HepG2 (cell line): ENCODE measurements at regions of chr1 and their contacts with region 1.

Region 1: GRCh38 chr1:40531381-40532061 is at the start of gene ZNF684:
- DNase-seq: peak; percentile 96
- ATAC-seq: peak; percentile 95
- H3K4me3 ChIP-seq: peak within 1 kb of the TSS; percentile 78 to 94 (median 85)
- H3K27ac ChIP-seq: peak within 1 kb of the TSS; percentile 82
- H3K4me1 ChIP-seq: peaks cover 46% of the 10 kb centered on the region
- H3K27me3 ChIP-seq: no peaks in the 10 kb centered on the region; a peak in 1 of 5 replicates
- CTCF ChIP-seq: no peak
- EP300 ChIP-seq: peak in 1 of 2 experiments; percentile 48; a peak in 2 of 4 replicates
- POLR2A ChIP-seq: peak; percentile 74 to 76
- RAD21 ChIP-seq: no peak
- total RNA-seq, gene ZNF684: 15.2 and 18.8 TPM in 2 replicates

Region 2: GRCh38 chr1:40508375-40509341 is 22.9 kb before region 1 on chr1 and contains the start of gene EXO5:
- CTCF ChIA-PET with region 1: no interaction called
- POLR2A ChIA-PET with region 1: interaction called, 27 read pairs
- in situ Hi-C with region 1: no loop called
- intact Hi-C with region 1: no loop called
- DNase-seq: peak; percentile 58
- ATAC-seq: peak; percentile 98
- H3K4me3 ChIP-seq: peak within 1 kb of the TSS; percentile 70 to 79 (median 70)
- H3K27ac ChIP-seq: peak within 1 kb of the TSS; percentile 76
- H3K4me1 ChIP-seq: peaks cover 18% of the 10 kb centered on the region
- H3K27me3 ChIP-seq: no peaks in the 10 kb centered on the region; a peak in 1 of 5 replicates
- CTCF ChIP-seq: no peak; the same call in 1 of the 2 replicates
- EP300 ChIP-seq: no peak
- POLR2A ChIP-seq: peak; percentile 76 to 93
- RAD21 ChIP-seq: 0 out of 2 replicates have a peak, but pooled peaks have one; percentile 42
- total RNA-seq, gene EXO5: 20.5 and 29.6 TPM in 2 replicates

Region 3: GRCh38 chr1:40575336-40575735 is 43.8 kb after region 1 on chr1:
- CTCF ChIA-PET with region 1: no interaction called
- POLR2A ChIA-PET with region 1: no interaction called
- in situ Hi-C with region 1: no loop called
- intact Hi-C with region 1: no loop called
- DNase-seq: no peak
- ATAC-seq: no peak
- H3K4me3 ChIP-seq: no peak overlapping the region
- H3K27ac ChIP-seq: no peak overlapping the region
- H3K4me1 ChIP-seq: no peaks in the 10 kb centered on the region
- H3K27me3 ChIP-seq: peaks cover 0 to 7% of the 10 kb centered on the region in 2 experiments; a peak in 2 of 5 replicates
- CTCF ChIP-seq: no peak
- EP300 ChIP-seq: no peak
- POLR2A ChIP-seq: no peak
- RAD21 ChIP-seq: no peak

Region 4: GRCh38 chr1:41294216-41294615 is 762.7 kb after region 1 on chr1:
- CTCF ChIA-PET with region 1: no interaction called
- POLR2A ChIA-PET with region 1: no interaction called
- in situ Hi-C with region 1: no loop called
- intact Hi-C with region 1: no loop called
- DNase-seq: no peak
- ATAC-seq: no peak
- H3K4me3 ChIP-seq: no peak overlapping the region
- H3K27ac ChIP-seq: no peak overlapping the region
- H3K4me1 ChIP-seq: peaks cover 8% of the 10 kb centered on the region; the same call in 1 of the 2 replicates
- H3K27me3 ChIP-seq: no peaks in the 10 kb centered on the region; a peak in 2 of 5 replicates
- CTCF ChIP-seq: no peak
- EP300 ChIP-seq: no peak
- POLR2A ChIP-seq: no peak
- RAD21 ChIP-seq: no peak